A673 (cell line): ENCODE measurements at regions of chr9 and their contacts with region 1.

Region 1: GRCh38 chr9:73683862-73684591 is 532.4 kb downstream of the ANXA1 start:
- DNase-seq: peak; percentile 48
- H3K4me3 ChIP-seq: no peak overlapping the region
- H3K27ac ChIP-seq: no peak overlapping the region
- H3K4me1 ChIP-seq: no peaks in the 10 kb centered on the region
- H3K27me3 ChIP-seq: no peaks in the 10 kb centered on the region
- CTCF ChIP-seq: peak; percentile 70

Region 2: GRCh38 chr9:73807952-73808351 is 123.9 kb after region 1 on chr9:
- CTCF ChIA-PET with region 1: no interaction called
- POLR2A ChIA-PET with region 1: no interaction called
- intact Hi-C with region 1: no loop called
- DNase-seq: no peak
- H3K4me3 ChIP-seq: no peak overlapping the region
- H3K27ac ChIP-seq: no peak overlapping the region
- H3K4me1 ChIP-seq: no peaks in the 10 kb centered on the region
- H3K27me3 ChIP-seq: no peaks in the 10 kb centered on the region
- CTCF ChIP-seq: no peak

Region 3: GRCh38 chr9:74006935-74007334 is 322.9 kb after region 1 on chr9:
- CTCF ChIA-PET with region 1: no interaction called
- POLR2A ChIA-PET with region 1: no interaction called
- intact Hi-C with region 1: loop called (anchors 5 kb)
- DNase-seq: peak; percentile 25
- H3K4me3 ChIP-seq: no peak overlapping the region
- H3K27ac ChIP-seq: no peak overlapping the region
- H3K4me1 ChIP-seq: no peaks in the 10 kb centered on the region
- H3K27me3 ChIP-seq: no peaks in the 10 kb centered on the region
- CTCF ChIP-seq: peak; percentile 23; the same call in 1 of the 2 replicates

Region 4: DNA sequence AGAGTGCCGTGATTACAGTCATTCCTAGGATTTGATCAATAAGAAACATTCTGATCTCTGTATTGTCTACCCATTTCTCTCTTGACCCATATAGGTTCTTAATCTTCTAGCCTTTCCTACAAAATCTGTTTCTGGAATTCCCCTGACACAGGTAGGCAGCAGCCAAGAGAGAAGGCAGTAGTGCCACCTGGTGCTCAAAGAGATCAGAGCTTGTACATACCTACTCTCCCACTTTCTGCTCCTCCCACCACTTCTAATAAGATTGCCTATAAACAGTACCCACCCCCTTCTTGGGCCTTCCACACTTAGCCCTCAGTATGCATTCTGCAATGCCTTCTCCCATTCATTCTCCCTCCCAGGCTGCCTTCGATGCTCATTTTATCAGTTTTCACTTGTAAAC is 695.7 kb after region 1 on chr9:
- CTCF ChIA-PET with region 1: no interaction called
- POLR2A ChIA-PET with region 1: no interaction called
- intact Hi-C with region 1: loop called (anchors 5 kb)
- DNase-seq: peak; percentile 17
- H3K4me3 ChIP-seq: no peak overlapping the region
- H3K27ac ChIP-seq: no peak overlapping the region
- H3K4me1 ChIP-seq: no peaks in the 10 kb centered on the region
- H3K27me3 ChIP-seq: no peaks in the 10 kb centered on the region
- CTCF ChIP-seq: 0 out of 2 replicates have a peak, but pooled peaks have one; percentile 39

Region 5: DNA sequence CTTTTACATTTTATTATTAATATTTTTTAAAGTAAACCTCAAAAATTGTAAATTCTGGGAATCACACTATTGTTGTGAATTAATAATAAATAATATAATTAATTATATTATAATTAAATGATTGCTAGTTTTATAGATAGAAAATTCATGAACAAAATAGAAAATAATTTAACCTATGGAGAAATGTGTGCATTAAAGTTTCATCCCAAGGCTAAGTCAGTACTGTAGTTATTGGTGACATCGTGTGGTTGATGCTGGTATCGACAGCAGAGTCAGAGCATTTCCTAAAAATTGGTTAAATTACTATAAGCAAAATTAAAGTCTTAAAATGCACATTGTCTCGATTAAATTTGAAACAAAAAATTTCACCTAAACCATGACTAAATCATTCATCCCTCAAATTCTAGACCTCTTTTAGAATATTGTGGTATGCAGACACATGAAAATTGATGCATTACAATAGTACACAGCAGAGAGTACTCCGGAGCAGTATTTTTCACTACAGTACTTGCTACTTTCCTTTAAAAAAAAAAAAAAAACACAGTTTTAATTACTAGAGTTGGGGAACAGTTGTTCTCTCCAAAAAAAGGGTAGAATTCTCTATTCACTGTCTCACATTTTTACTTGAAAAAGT is 887.0 kb after region 1 on chr9:
- CTCF ChIA-PET with region 1: no interaction called
- POLR2A ChIA-PET with region 1: no interaction called
- intact Hi-C with region 1: loop called (anchors 1 kb)
- DNase-seq: peak; percentile 39
- H3K4me3 ChIP-seq: no peak overlapping the region
- H3K27ac ChIP-seq: no peak overlapping the region
- H3K4me1 ChIP-seq: no peaks in the 10 kb centered on the region
- H3K27me3 ChIP-seq: peaks cover 10% of the 10 kb centered on the region
- CTCF ChIP-seq: peak; percentile 73

Region 6: DNA sequence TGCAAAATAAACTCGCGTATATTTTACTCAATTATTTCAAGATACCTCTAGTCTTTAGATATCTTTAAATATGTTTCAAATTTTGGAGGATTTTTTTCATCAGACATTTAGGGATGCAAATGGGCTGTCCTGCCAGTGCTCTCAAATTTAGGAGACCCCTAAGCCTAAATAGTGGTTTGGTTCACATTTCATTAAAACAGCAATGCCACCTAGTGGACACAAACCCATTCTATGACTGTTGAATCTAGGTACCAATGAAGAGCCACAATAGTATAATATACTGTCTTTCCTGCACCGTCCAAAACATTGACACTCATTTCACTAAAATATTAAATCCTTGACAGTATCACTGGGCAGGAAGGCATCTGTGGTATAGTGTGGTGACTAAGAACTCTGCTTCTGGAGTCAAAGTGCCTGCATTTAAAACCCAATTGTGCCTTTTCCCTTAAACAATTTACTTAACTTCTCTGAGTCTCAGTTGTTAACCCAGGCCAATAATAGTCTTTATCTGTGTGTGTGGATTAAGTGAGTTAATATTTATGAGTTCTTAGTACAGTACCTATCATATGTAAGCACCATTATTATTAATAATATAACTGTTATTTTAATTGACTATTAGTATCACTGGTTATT is 961.1 kb after region 1 on chr9:
- CTCF ChIA-PET with region 1: no interaction called
- POLR2A ChIA-PET with region 1: no interaction called
- intact Hi-C with region 1: loop called (anchors 5 kb)
- DNase-seq: peak; percentile 35
- H3K4me3 ChIP-seq: no peak overlapping the region
- H3K27ac ChIP-seq: no peak overlapping the region
- H3K4me1 ChIP-seq: no peaks in the 10 kb centered on the region
- H3K27me3 ChIP-seq: peaks cover 19% of the 10 kb centered on the region
- CTCF ChIP-seq: peak; percentile 67

Region 7: GRCh38 chr9:74742792-74743730 is 1059.0 kb after region 1 on chr9:
- CTCF ChIA-PET with region 1: no interaction called
- POLR2A ChIA-PET with region 1: no interaction called
- intact Hi-C with region 1: loop called (anchors 5 kb)
- DNase-seq: peak; percentile 45
- H3K4me3 ChIP-seq: no peak overlapping the region
- H3K27ac ChIP-seq: no peak overlapping the region
- H3K4me1 ChIP-seq: no peaks in the 10 kb centered on the region
- H3K27me3 ChIP-seq: peaks cover 22% of the 10 kb centered on the region
- CTCF ChIP-seq: peak; percentile 75